Naive thymus-derived CD8-positive, alpha-beta T cell (primary cell): ENCODE measurements at regions of chr3 and their contacts with region 1.

Region 1: DNA sequence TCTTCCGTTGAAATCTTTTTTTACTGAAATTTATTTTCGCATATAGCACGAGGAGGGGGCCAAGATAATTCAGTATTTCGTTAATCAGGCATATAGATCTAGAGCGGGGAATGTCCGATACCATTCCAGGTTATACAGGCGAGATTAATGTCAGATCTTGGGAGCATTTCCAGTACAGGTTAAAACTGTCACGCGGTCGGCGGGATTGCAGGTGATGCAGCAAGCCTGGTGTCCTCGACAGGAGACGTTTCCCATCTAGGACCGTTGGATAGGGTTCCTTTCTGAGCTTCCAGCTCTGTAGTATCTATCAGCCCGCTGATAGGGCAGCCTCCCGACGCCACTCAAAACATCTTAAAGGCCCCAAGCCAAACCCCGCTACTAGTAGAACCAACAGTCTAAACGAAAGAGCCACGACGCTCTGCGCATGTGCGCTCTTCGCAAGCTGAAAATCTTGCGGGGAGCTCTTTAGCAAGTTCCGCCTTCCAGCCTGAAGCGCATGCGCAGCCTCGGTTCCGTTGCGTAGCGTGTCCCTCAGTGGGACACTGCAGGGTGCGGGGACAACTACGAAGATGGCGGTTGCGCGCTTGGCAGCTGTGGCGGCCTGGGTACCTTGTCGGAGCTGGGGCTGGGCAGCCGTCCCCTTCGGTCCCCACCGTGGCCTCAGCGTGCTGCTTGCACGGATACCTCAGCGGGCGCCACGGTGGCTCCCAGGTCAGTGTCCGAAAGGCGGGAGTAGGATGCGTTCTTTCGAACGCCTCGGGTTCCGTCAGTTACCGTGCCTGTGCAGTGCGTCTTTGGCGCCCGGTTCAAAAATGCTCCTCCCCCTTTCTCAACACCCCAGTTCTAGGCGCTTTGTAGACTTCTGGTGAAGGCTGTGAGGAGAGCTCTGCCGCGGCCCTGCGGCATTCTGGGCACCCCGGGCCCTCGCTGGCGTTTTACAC is at the start of gene ABHD10:
- DNase-seq: peak; percentile 90 to 99 (median 94)
- ATAC-seq: peak; percentile 95
- H3K4me3 Mint-ChIP-seq: peak within 1 kb of the TSS; percentile 90 to 96 (median 92)
- H3K27ac Mint-ChIP-seq: peak within 1 kb of the TSS; percentile 88 to 97 (median 94)
- H3K4me1 Mint-ChIP-seq: peaks cover 12 to 48% (median 42%) of the 10 kb centered on the region in 4 donors
- H3K27me3 Mint-ChIP-seq: no peaks in the 10 kb centered on the region
- polyA plus RNA-seq, gene ABHD10: 31.3 to 40.9 (median 39.2) TPM

Region 2: GRCh38 chr3:111989061-111989678 is 10.4 kb after region 1 on chr3:
- POLR2A ChIA-PET with region 1: interaction called, 14 read pairs
- DNase-seq: peak in 2 of 10 donors; percentile 23 to 42
- ATAC-seq: peak; percentile 74 to 82
- H3K4me3 Mint-ChIP-seq: no peak overlapping the region
- H3K27ac Mint-ChIP-seq: peak overlapping the region in 2 of 10 donors; percentile 33 to 69
- H3K4me1 Mint-ChIP-seq: peaks cover 19 to 47% (median 33%) of the 10 kb centered on the region in 4 donors
- H3K27me3 Mint-ChIP-seq: no peaks in the 10 kb centered on the region

Region 3: DNA sequence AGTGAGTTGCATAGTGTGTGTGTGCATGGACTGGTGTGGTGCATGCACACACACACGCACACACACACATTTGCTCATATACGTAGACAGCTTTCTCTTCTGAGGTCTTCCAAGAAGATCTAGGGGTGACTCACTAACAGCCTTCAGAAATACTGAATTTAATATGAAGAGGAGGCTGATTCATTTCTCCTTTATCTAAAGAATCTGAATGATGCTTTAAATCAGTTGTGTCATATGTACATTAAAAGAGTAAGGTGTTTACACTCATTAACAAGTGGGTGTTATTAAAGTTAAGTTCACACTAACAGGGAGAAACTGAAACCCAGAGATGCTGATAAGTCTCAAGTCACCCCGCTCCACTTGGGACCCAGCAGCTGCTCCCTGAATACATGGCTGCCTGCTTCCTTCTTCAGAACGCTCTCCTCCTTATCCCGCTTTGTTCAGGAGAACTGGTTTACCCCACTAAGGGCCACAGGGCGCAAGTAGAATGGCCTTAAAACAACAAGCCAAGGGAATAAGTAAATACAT is 77.8 kb after region 1 on chr3:
- POLR2A ChIA-PET with region 1: no interaction called
- DNase-seq: no peak
- ATAC-seq: no peak
- H3K4me3 Mint-ChIP-seq: no peak overlapping the region
- H3K27ac Mint-ChIP-seq: no peak overlapping the region
- H3K4me1 Mint-ChIP-seq: no peaks in the 10 kb centered on the region
- H3K27me3 Mint-ChIP-seq: peaks cover 0 to 6% (median 2%) of the 10 kb centered on the region in 5 donors